ENCODE measurements at regions of chr2 and their contacts with region 1.

Region 1: GRCh38 chr2:209334198-209335017 is 89.4 kb upstream of the MAP2 start:
- DNase-seq: peak in 8 of 10 donors; percentile 30 to 69 (median 49)
- H3K4me3 ChIP-seq: peak overlapping the region in 8 of 59 donors; percentile 3 to 33 (median 21)
- H3K27ac ChIP-seq: no peak overlapping the region
- H3K27me3 ChIP-seq: peaks cover 0 to 4% (median 0%) of the 10 kb centered on the region in 45 donors
- CTCF ChIP-seq: peak; percentile 73 to 98 (median 88)

Region 2: DNA sequence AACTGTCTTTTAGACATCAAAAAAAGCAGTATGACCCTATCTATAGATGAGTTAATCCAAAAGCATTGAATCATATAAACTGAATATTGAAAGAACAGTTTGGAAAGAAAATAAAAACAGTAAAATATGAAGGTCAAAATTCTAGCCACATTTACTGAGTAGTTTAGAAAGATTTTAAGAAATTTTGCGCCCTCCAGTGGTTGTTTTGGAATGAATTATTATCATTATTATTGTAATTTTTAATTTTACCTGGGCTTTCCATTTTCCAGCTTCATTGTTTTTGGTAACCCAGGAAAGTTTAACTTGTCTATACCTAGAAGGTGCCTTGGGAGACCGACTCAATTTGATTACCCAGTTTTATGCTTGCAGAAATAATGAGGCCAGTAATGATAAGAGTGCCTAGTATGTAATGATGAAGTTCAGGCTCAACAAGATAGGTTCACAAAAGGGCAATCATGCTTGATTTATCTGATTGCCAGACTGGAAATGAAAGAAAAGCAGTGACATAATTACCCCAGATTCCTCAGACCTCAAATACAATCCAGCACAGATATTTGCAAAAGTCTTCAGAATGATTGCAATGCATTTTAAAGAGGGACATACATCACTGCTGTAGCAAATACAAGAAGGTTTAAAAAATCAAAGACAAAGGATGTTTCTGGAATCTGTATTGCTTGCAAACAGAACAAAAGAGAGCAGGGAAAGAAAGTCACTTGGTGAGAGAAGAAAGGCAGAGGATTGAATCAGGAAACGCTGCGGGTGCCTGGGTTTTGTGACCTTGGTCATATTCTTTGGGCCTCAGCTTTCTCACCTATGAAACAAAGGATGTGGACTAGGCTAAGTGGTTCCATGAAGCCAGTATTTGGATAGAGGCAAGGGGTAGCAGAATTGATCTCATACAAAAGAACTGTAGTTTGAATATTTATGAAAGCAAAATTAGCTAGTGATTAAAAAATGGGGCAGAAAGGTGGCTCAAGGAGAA is 243.3 kb after region 1 on chr2:
- intact Hi-C with region 1: loop called (anchors 10 kb)
- DNase-seq: no peak
- H3K4me3 ChIP-seq: peak overlapping the region in 2 of 59 donors; percentile 57 to 65
- H3K27ac ChIP-seq: peak overlapping the region in 37 of 59 donors; percentile 0 to 87 (median 59)
- H3K27me3 ChIP-seq: peaks cover 0 to 6% (median 0%) of the 10 kb centered on the region in 45 donors
- CTCF ChIP-seq: peak; percentile 26 to 73 (median 54)